ENCODE measurements at regions of chr19 and their contacts with region 1.

Region 1: DNA sequence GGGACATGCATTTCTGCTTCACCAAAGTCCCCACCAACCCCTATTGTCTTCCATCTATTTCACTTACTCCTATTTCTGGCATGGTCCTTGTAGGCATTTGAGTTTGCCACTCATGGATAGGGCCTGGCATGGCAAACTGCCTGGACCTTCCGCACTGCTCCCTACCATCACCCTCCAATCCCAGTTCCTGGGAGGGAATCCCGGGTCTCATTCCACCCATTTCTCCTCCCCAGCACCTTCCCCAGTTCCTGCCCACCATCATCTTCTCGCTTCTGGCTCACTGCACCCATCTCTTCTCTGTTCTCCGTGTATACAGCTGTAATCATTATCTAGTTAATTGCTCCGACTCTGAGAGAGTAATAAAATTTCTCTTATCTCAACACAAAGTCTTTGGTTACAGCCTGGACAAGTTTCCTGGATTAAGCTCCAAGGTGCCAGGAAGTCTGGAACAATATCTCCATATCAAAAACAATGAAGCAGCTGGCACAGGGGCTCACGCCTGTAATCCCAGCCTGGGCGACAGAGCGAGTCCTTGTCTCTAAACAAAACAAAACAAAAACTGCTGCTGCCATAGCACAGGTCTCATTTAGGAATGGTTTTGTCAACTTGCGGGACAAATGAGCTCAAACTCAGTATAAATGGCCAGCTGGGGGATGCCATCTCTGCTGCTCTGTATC is 17.0 kb upstream of the COX7A1 start:
- DNase-seq: no peak
- ATAC-seq: peak in 1 of 2 donors; percentile 50
- H3K4me3 ChIP-seq: no peak overlapping the region
- H3K27ac ChIP-seq: peak overlapping the region; percentile 80
- H3K4me1 ChIP-seq: peaks cover 8% of the 10 kb centered on the region
- H3K27me3 ChIP-seq: no peaks in the 10 kb centered on the region
- CTCF ChIP-seq: no peak

Region 2: DNA sequence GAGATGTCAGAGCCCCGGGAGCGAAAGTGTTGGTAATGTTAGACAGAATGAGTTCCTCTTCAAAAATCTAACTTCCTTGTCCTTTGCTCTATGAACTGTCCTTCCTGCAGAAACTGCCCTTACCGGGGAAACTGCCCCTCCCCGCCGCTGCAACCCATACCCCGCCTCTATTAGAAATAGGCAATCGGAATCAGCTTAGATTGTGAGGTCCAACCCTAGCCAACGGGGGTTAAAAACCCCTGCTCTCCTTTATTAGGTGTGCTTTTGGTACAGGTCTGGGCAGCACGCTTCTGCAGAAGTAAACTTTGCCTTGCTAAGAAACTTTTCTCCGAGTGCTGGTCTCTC is 40.9 kb before region 1 on chr19:
- intact Hi-C with region 1: loop called (anchors 5 kb)
- DNase-seq: peak; percentile 67
- ATAC-seq: peak; percentile 30 to 45
- H3K4me3 ChIP-seq: peak overlapping the region; percentile 59
- H3K27ac ChIP-seq: peak overlapping the region; percentile 94
- H3K4me1 ChIP-seq: peaks cover 42% of the 10 kb centered on the region
- H3K27me3 ChIP-seq: no peaks in the 10 kb centered on the region
- CTCF ChIP-seq: no peak

Measured in lower lobe of right lung (tissue), 2 donors.